ENCODE measurements at regions of chr21 and their contacts with region 1.

Region 1: GRCh38 chr21:42624095-42624790 is 29.2 kb upstream of the PDE9A start:
- DNase-seq: no peak

Region 2: DNA sequence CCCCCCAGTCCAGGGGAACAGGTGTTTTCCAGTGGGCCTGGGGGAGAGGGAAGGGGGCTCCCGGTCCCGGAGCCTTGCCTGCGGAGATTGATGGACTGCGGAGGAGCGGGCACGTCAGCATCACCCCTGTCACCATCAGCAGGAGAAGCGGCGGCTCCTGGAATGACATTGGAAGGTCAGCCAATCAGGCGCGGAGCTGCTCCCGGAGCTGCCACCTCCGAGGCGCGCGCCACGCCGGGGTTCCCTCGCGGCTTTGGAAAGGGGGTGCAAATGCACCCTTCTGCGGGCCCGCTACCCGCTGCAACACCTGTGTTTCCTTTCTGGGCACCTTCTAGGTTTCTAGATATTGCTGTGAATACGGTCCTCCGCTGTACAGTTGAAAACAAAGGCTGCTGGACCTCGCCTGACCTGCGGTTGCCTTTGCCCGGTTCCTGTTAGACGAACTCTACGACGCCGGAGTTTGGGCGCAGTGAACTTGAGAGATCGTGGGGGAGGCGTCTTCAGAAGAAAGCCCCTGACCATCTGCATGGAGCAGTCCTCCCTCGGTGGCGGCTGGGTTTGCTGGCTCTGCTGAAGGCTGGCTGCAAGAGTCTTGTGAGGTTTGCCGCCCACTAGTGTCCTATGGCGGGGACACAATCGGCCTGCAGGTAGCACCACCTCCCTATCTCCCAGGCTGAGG is 1782.6 kb before region 1 on chr21:
- intact Hi-C with region 1: no loop called
- DNase-seq: no peak

Region 3: GRCh38 chr21:42612388-42612787 is 11.9 kb before region 1 on chr21:
- intact Hi-C with region 1: loop called in 1 of 2 experiments (anchors 1 kb)
- DNase-seq: no peak

Region 4: GRCh38 chr21:42654109-42654912 is 30.1 kb after region 1 on chr21:
- intact Hi-C with region 1: no loop called
- DNase-seq: peak; percentile 70

Measured in posterior vena cava (tissue), 2 donors.